Vagina (tissue), 2 donors: ENCODE measurements at regions of chr16 and their contacts with region 1.

Region 1: DNA sequence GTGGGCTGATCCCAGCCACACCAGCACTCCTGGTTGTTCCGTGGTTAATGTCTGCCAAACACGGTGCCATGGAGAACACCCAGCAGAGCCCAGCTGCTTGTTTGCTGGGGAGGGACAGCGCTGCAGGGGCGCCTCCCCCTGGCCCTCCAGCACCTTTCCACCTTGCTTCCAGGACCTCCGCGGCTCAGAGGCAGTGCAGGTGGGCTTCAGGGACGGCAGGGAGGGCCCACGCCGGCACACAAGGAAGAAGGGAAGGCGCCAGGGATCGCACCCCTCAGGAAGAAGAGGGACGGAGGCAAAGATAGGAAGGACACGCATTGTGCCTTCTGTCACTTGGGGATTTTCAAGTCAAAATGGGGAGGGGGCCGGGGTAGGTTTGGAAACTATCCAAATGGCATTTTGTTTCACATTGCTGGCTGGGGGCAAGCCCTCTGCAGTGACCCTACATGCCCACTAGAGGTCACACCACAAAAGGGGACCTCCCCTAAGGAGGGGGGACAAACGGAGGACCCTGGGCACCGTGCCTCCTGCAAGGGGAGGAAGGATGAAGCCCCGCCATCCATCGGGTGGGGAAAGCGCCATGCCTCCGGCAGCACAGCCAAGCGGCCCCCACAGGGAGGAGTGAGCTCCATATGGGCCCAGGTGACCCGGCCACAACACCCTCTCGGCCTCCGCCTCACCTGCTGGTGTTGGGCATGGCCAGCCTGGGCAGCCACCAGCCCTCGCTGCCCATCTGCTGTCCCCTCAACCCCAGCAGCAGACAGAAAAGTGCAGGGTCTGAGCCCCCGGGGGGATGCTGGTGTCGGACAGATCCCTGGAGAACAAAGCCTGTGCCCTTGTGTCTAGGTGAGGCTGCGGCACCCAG is 7.5 kb upstream of the C16orf95 start:
- DNase-seq: no peak
- H3K4me3 ChIP-seq: no peak overlapping the region
- H3K27ac ChIP-seq: peak overlapping the region; percentile 22
- H3K4me1 ChIP-seq: peaks cover 13% of the 10 kb centered on the region
- H3K27me3 ChIP-seq: no peaks in the 10 kb centered on the region
- CTCF ChIP-seq: peak in 2 of 3 experiments; percentile 42 to 58
- POLR2A ChIP-seq: no peak

Region 2: GRCh38 chr16:87383629-87384161 is 59.1 kb after region 1 on chr16 and contains the start of gene FBXO31:
- intact Hi-C with region 1: loop called (anchors 5 kb)
- DNase-seq: peak in 1 of 2 donors; percentile 95
- H3K4me3 ChIP-seq: peak within 1 kb of the TSS; percentile 62 to 94
- H3K27ac ChIP-seq: peak within 1 kb of the TSS; percentile 98
- H3K4me1 ChIP-seq: peaks cover 73% of the 10 kb centered on the region
- H3K27me3 ChIP-seq: no peaks in the 10 kb centered on the region
- CTCF ChIP-seq: no peak
- POLR2A ChIP-seq: peak; percentile 54 to 95
- total RNA-seq, gene FBXO31: 93.3 TPM